Activated B cell treated with CpG ODN at 0.5 μM for 24 hours (primary cell): ENCODE measurements at regions of chr6 and their contacts with region 1.

Region 1: DNA sequence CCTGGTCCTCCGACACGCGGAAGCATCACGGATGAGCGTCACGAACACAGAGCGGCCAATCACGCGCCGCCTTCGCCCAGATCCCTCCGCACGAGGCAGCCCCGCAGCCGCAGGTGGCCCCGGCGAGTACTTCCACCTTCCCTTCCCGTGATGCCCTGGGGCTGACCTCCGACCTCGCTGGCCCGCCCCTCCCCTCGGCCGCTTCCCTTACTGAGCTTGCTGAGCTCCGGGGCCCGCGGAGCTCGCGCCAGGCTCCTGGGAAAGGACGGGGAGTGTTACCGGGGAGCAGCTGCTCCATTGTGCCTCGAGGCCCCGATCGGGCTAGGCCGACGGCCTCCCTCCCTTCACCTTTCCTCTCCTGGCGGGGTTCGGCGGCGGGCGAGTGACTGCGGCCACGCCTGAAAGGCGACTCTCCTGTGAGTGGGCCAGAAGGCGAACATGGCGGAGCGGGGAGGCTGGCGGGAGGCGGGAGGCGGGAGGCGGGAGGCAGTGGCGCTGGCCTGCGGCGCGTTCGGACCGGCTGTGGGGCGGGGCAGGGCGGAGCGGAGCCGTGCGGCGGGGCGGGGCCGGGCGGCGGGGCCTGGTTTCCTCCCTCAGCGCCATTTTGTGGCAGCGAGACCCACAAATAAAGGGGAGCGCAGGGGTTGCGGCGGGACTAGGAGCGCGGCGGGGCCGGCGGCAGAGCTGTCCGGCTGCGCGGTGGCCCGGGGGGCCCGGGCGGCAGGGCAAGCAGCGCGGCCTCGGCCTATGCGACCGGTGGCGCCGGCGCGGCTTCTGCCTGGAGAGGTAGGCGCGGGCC is at the start of gene WTAP:
- DNase-seq: peak; percentile 93
- ATAC-seq: peak; percentile 83
- H3K4me3 Mint-ChIP-seq: peak within 1 kb of the TSS; percentile 93
- H3K27ac Mint-ChIP-seq: peak within 1 kb of the TSS; percentile 99
- H3K4me1 Mint-ChIP-seq: peaks cover 50% of the 10 kb centered on the region
- H3K27me3 Mint-ChIP-seq: no peaks in the 10 kb centered on the region
- CTCF ChIP-seq: no peak
- total RNA-seq, gene WTAP: 124 and 141 TPM in 2 replicates

Region 2: DNA sequence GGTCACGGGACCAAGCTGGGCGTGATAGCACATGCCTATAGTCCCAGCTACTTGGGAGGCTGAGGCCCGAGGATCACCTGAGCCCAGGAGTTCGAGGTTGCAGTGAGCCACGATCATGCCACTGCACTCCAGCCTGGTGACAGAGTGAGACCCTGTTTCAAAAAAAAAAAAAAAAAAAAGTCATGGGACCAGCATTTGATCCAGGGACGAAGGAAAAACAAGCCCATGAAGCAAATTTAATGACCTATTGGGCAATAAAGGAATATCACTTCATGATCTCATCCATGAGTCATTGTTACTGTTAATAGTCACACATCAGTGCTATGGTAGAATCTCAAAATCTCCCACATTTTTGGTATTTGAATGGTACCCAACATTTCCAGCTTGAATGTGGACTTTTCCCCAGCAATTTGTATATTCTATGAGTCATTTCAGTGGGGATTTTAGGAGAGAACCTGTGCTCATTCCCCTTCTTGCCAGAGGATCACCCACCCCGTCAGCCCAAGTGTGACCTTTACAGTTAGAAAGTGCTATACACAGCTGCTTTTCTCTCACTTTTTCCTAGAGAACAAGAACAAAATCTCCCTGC is 25.6 kb before region 1 on chr6:
- CTCF ChIA-PET with region 1: no interaction called
- POLR2A ChIA-PET with region 1: interaction called, 12 read pairs
- intact Hi-C with region 1: no loop called
- DNase-seq: no peak
- ATAC-seq: peak; percentile 33
- H3K4me3 Mint-ChIP-seq: no peak overlapping the region
- H3K27ac Mint-ChIP-seq: peak overlapping the region; percentile 75
- H3K4me1 Mint-ChIP-seq: peaks cover 14% of the 10 kb centered on the region
- H3K27me3 Mint-ChIP-seq: no peaks in the 10 kb centered on the region
- CTCF ChIP-seq: no peak

Region 3: DNA sequence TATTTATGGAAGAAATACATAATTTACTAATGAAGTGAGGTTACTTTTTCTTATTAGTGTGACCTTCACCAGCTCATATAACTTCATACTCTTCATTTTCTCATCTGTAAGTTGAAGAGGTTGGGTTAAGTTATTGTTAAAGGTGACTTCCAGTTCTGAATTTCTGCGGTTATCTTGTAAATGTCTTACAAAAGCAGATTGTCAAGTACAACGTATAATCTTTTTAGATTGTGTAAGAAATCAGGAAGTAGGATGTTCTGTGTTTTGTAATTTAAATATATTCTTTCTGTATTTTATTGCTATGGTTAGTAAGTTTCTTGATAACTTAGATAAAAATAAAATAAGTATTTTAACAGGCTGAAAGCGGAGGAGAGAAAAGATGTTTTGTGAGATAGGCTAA is 12.2 kb after region 1 on chr6:
- CTCF ChIA-PET with region 1: interaction called, 3 read pairs
- POLR2A ChIA-PET with region 1: no interaction called
- intact Hi-C with region 1: loop called (anchors 1 kb)
- DNase-seq: no peak
- ATAC-seq: no peak
- H3K4me3 Mint-ChIP-seq: no peak overlapping the region
- H3K27ac Mint-ChIP-seq: no peak overlapping the region
- H3K4me1 Mint-ChIP-seq: peaks cover 16% of the 10 kb centered on the region
- H3K27me3 Mint-ChIP-seq: no peaks in the 10 kb centered on the region
- CTCF ChIP-seq: no peak

Region 4: DNA sequence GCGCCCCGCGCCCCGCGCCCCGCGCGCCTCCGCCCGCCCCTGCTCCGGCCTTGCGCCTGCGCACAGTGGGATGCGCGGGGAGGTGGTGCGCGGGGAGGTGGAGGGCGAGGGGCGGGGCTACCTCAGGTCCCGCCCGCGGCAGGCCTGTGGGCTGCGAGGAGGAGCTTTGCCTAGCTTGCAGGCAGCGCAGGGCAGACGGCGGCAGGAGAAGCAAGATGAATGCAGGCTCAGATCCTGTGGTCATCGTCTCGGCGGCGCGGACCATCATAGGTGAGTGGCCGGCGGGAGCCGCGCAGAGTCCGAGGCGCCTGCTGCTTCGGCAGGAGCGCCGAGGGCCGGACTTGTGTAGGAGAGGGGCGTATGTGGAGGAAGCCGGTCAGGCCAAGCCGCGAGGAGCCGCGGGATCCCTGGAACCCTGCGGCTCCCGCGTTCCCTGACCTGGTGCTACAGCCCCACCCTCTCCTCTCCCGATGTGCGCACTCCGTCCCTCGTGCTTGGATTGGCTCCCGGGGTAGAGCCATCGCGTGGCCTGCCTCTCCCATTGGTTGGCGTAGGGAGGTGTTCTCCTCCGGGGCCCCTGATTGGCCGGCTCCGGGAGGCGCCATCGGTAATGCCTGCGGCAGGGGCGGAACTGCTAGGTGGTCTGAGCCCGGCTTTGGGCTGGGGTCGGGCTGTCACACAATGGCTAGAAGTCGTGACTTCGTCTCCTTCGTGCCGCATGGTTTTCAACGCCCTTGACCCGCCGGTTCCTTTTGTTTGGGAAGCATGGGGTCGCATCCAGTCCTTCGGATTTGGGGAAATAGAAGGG is 35.0 kb after region 1 on chr6 and contains the start of gene ACAT2:
- CTCF ChIA-PET with region 1: no interaction called
- POLR2A ChIA-PET with region 1: interaction called, 46 read pairs
- intact Hi-C with region 1: loop called (anchors 1 kb)
- DNase-seq: peak; percentile 85
- ATAC-seq: peak; percentile 95
- H3K4me3 Mint-ChIP-seq: peak within 1 kb of the TSS; percentile 96
- H3K27ac Mint-ChIP-seq: peak within 1 kb of the TSS; percentile 94
- H3K4me1 Mint-ChIP-seq: peaks cover 18% of the 10 kb centered on the region
- H3K27me3 Mint-ChIP-seq: no peaks in the 10 kb centered on the region
- CTCF ChIP-seq: no peak
- total RNA-seq, gene ACAT2: 82.0 and 87.9 TPM in 2 replicates

Region 5: DNA sequence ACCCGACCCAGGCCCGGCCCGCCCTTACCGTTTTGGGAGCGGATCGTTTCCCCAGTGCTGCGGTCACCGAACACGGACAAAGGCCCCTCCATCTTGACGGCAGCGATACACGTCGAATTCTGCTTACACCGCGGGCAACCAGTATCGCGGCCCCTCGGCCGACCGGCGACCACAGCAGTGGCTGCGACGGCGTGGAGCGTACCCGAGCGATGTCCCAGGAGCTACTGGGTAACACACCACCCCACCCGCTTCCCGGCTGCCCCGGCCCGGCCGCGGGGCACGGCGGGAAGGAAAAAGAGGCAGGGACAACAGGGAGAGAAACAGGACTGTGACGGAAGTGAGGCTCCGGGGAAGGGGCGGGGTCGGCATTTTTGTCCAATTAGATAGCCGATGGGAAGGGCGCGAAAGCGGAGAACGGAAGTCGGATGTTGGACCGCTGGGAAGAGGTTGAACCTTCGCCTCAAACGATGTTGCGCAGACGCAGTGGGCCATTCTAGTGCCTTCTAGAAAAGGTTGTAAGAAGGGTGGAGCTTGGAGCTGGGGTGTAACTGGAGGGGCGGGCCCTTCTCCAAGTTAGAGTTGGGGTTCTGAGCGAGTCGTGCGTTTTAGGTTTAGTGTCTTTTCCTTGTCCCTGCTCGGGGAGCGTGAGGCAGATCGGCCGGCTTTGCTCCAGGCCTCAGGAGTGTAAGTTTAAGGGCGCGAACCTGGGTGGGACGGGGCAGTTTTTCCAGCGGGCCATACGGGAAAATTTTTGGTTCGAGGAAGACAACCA is 62.4 kb after region 1 on chr6 and contains the start of gene TCP1:
- CTCF ChIA-PET with region 1: interaction called, 4 read pairs
- POLR2A ChIA-PET with region 1: interaction called, 102 read pairs
- intact Hi-C with region 1: loop called (anchors 1 kb)
- DNase-seq: peak; percentile 90
- ATAC-seq: peak; percentile 78
- H3K4me3 Mint-ChIP-seq: peak within 1 kb of the TSS; percentile 95
- H3K27ac Mint-ChIP-seq: peak within 1 kb of the TSS; percentile 95
- H3K4me1 Mint-ChIP-seq: peaks cover 49% of the 10 kb centered on the region
- H3K27me3 Mint-ChIP-seq: no peaks in the 10 kb centered on the region
- CTCF ChIP-seq: no peak
- total RNA-seq, gene TCP1: 181 and 199 TPM in 2 replicates

Region 6: DNA sequence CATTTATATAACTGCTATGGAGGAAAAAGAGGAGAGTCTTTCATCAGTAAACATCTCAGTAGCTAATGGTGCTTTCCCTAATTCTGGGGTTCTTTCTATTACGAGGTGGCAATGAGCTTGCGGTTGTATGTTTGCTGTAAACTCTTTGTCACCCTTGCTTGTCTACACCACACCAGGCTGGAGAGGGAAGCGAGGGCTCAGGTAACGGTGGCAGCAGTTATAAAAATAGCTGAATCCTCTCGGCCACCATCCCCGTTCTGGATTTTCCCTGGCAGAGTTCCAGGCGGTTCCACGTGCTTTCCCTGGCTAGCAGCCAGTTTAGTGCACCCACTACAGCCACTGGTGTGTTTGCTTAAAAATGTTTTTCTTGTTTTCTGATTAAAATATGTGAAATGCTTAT is 202.7 kb after region 1 on chr6:
- CTCF ChIA-PET with region 1: no interaction called
- POLR2A ChIA-PET with region 1: no interaction called
- intact Hi-C with region 1: loop called (anchors 5 kb)
- DNase-seq: no peak
- ATAC-seq: no peak
- H3K4me3 Mint-ChIP-seq: no peak overlapping the region
- H3K27ac Mint-ChIP-seq: no peak overlapping the region
- H3K4me1 Mint-ChIP-seq: peaks cover 28% of the 10 kb centered on the region
- H3K27me3 Mint-ChIP-seq: peaks cover 8% of the 10 kb centered on the region
- CTCF ChIP-seq: no peak

Region 7: GRCh38 chr6:159968440-159969203 is 241.5 kb after region 1 on chr6 and contains the start of gene IGF2R:
- CTCF ChIA-PET with region 1: no interaction called
- POLR2A ChIA-PET with region 1: interaction called, 6 read pairs
- intact Hi-C with region 1: loop called (anchors 1 kb)
- DNase-seq: peak; percentile 93
- ATAC-seq: peak; percentile 87
- H3K4me3 Mint-ChIP-seq: peak within 1 kb of the TSS; percentile 88
- H3K27ac Mint-ChIP-seq: peak within 1 kb of the TSS; percentile 78
- H3K4me1 Mint-ChIP-seq: peaks cover 35% of the 10 kb centered on the region
- H3K27me3 Mint-ChIP-seq: no peaks in the 10 kb centered on the region
- CTCF ChIP-seq: no peak
- total RNA-seq, gene IGF2R: 69.6 and 79.5 TPM in 2 replicates